HEK293 (cell line): ENCODE measurements at regions of chr1 and their contacts with region 1.

Region 1: GRCh38 chr1:149886396-149887195 is 12.8 kb upstream of the BOLA1 start:
- H3K4me3 ChIP-seq: peak overlapping the region; percentile 64
- H3K27ac ChIP-seq: peak overlapping the region; percentile 68
- H3K4me1 ChIP-seq: 0 out of 2 replicates have a peak, but pooled peaks cover 2% of the 10 kb centered on the region
- CTCF ChIP-seq: no peak

Region 2: GRCh38 chr1:149844101-149844500 is 42.5 kb before region 1 on chr1:
- CTCF ChIA-PET with region 1: no interaction called
- POLR2A ChIA-PET with region 1: interaction called, 18 read pairs
- H3K4me3 ChIP-seq: peak overlapping the region; percentile 54
- H3K27ac ChIP-seq: no peak overlapping the region
- H3K4me1 ChIP-seq: 0 out of 2 replicates have a peak, but pooled peaks cover 8% of the 10 kb centered on the region
- CTCF ChIP-seq: no peak

Region 3: GRCh38 chr1:149917571-149918144 is 31.1 kb after region 1 on chr1 and contains the start of gene SV2A:
- CTCF ChIA-PET with region 1: no interaction called
- POLR2A ChIA-PET with region 1: interaction called, 12 read pairs
- H3K4me3 ChIP-seq: peak within 1 kb of the TSS; percentile 84
- H3K27ac ChIP-seq: peak within 1 kb of the TSS; percentile 37; the same call in 1 of the 2 replicates
- H3K4me1 ChIP-seq: 0 out of 2 replicates have a peak, but pooled peaks cover 3% of the 10 kb centered on the region
- CTCF ChIP-seq: no peak

Region 4: DNA sequence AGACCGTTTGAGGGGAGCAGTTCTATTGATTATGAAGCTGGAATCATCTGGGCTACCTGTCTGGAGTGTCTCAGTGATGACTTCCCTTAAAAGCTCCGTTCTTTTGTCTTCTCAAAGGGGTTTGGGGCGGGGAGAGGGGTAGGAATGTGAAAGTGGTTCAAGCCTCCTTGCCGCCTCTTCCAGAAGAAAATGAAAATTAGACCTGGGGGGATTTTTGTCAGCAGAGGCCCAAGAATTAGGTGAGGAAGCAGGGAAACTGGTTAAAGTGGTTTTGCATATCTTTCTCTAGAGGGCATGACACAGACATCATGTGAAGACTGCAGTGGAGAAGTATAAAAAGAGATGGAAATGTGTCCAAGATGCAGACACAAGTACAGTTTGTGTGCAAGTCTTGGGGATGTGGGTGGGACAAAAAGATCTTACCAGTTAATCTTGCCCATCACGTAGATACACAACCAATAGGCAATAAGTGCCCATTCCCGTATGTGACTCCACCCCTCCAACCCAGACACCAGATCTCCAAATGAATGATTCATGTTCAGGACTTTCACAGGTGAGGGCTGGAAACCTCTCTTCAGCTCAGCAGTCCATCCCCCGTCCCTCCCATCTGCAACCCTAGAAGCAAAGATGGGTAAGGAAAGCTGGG is 50.6 kb after region 1 on chr1:
- CTCF ChIA-PET with region 1: interaction called, 7 read pairs
- POLR2A ChIA-PET with region 1: interaction called, 48 read pairs
- H3K4me3 ChIP-seq: peak overlapping the region; percentile 57
- H3K27ac ChIP-seq: peak overlapping the region; percentile 33; the same call in 1 of the 2 replicates
- H3K4me1 ChIP-seq: peaks cover 6% of the 10 kb centered on the region; the same call in 1 of the 2 replicates
- CTCF ChIP-seq: no peak

Region 5: DNA sequence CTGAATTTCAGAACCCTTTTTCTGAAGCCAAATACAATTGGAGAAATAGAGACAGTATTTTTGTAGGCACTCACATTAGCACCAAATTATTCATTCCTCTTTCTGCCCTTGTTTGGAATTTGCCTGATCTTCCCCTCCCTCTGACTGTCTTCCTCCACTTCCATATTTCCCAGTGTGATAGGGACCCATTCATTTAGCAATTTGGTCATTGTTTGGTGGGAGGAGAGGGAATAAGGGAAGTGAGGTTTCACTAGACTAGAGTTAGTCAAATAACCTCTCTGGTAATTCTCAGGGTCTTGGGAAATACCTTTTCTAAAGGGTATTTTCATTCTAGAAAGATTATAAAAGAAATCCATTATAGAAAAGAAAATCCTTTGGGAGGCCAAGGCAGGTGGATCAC is 81.0 kb after region 1 on chr1:
- CTCF ChIA-PET with region 1: no interaction called
- POLR2A ChIA-PET with region 1: no interaction called
- H3K4me3 ChIP-seq: no peak overlapping the region
- H3K27ac ChIP-seq: no peak overlapping the region
- H3K4me1 ChIP-seq: no peaks in the 10 kb centered on the region
- CTCF ChIP-seq: no peak

Region 6: DNA sequence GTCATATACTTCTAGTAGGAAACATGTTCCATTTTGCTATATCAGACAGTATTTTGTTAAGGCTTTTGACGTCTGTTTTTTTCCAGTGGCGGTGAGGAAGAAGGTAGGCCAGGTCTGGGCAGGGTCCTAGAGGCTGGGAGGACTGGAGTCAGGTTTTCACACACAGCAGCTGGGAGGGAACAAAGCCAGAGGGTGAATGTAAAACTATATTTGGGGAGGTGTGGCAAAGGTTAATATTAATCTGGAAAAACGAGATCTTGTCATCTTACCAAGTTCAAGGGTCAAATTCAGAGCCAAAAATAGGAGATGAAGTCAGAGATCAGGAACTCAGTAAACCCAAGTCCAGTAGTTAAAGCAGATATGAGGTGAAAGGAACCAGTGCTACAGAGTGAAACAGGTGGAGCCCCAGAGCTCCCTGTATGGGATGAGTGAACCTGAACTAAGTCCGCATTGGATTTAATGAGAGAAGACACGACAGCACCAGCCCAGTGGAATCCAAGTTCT is 134.6 kb after region 1 on chr1:
- CTCF ChIA-PET with region 1: no interaction called
- POLR2A ChIA-PET with region 1: no interaction called
- H3K4me3 ChIP-seq: no peak overlapping the region
- H3K27ac ChIP-seq: no peak overlapping the region
- H3K4me1 ChIP-seq: no peaks in the 10 kb centered on the region
- CTCF ChIP-seq: no peak

Region 7: DNA sequence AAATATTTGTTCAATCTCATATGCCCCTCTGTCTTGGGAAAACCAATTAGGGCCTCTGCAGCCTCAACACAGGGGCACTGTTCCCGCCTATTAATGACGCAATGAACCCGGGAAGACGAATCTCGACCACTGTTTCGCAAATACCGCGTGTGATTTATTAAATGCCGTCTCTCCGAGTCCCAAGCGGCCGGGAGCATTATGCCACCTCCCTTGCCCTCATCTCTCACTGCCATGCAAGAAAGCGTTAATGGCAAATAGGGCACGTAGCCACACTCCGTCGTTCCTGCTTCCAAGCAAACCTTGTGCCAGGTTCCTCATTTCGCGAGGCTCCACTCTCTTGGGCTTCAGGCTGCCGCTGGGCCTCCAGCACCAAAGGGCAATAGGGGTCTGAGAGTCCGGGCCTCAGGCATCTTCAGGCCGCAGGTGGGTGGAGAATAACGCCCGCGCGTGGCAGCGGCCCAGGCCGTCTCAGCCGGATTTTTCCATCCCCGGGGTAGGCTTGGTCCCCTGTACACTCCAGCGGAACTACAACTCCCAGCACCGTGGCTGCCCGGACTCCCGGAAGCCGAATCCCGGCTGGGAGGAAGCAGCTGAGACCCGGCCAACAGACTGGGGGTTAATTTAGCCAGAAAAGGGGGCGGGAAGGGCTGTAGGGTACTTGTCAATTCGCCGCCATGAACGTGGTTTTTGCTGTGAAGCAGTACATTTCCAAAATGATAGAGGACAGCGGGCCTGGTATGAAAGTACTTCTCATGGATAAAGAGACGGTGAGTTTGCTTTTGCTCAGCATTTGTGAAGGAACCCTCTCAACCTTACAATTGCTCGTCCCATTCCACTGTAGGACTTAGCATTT is 180.8 kb after region 1 on chr1 and contains the start of gene VPS45:
- CTCF ChIA-PET with region 1: interaction called, 3 read pairs
- POLR2A ChIA-PET with region 1: interaction called, 15 read pairs
- H3K4me3 ChIP-seq: peak within 1 kb of the TSS; percentile 76
- H3K27ac ChIP-seq: peak within 1 kb of the TSS; percentile 96
- H3K4me1 ChIP-seq: peaks cover 6% of the 10 kb centered on the region
- CTCF ChIP-seq: peak; percentile 96

Region 8: GRCh38 chr1:150089846-150090520 is 203.4 kb after region 1 on chr1:
- CTCF ChIA-PET with region 1: no interaction called
- POLR2A ChIA-PET with region 1: no interaction called
- H3K4me3 ChIP-seq: no peak overlapping the region
- H3K27ac ChIP-seq: no peak overlapping the region
- H3K4me1 ChIP-seq: no peaks in the 10 kb centered on the region
- CTCF ChIP-seq: no peak

Region 9: GRCh38 chr1:150498342-150498741 is 611.7 kb after region 1 on chr1:
- CTCF ChIA-PET with region 1: no interaction called
- POLR2A ChIA-PET with region 1: no interaction called
- H3K4me3 ChIP-seq: no peak overlapping the region
- H3K27ac ChIP-seq: no peak overlapping the region
- H3K4me1 ChIP-seq: no peaks in the 10 kb centered on the region
- CTCF ChIP-seq: no peak